ENCODE measurements at regions of chr5 and their contacts with region 1.

Region 1: DNA sequence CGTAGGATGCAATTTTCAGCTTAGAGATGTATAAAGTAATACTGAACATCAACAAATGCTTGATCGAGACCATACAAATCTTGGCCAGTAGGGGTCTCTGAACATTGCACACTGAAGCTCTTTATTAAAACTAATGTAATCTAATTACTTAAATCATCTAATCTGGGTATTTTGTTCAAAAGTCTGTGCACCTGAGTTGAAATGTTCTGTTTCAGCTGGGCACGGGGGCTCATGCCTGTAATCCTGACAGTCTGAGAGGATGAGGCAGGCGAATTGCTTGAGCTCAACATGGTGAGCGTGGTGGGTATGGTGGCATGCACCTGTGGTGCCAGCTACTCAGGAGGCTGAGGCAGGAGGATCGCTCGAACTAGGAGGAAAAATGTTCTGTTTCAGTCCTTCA is 41.0 kb downstream of the ESM1 start:
- DNase-seq: peak; percentile 56
- H3K4me3 Mint-ChIP-seq: no peak overlapping the region
- H3K27ac Mint-ChIP-seq: no peak overlapping the region
- H3K4me1 Mint-ChIP-seq: peaks cover 18% of the 10 kb centered on the region
- H3K27me3 Mint-ChIP-seq: peaks cover 13% of the 10 kb centered on the region

Region 2: GRCh38 chr5:54738118-54738972 is 206.0 kb before region 1 on chr5:
- CTCF ChIA-PET with region 1: no interaction called
- DNase-seq: no peak
- H3K4me3 Mint-ChIP-seq: no peak overlapping the region
- H3K27ac Mint-ChIP-seq: no peak overlapping the region
- H3K4me1 Mint-ChIP-seq: peaks cover 18% of the 10 kb centered on the region
- H3K27me3 Mint-ChIP-seq: peaks cover 33% of the 10 kb centered on the region

Region 3: DNA sequence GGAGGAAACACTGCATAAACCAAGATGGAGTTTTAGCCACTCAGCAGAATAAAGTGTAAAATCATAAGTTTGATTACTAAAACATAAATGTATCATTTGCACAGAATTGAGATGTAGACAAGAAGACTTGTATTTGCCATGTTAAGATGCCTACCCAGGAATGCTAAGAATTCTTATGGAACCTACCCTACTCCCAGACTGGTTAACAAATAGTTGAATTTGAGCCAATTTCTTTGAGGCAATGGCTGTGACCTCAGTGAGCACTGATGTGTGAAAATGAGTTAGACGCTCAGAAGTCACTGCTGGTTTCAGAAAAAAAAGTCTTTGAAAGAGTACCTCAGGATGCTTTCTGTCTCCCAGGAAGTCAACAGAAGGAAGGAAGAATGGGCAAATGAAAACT is 54.5 kb before region 1 on chr5:
- CTCF ChIA-PET with region 1: no interaction called
- DNase-seq: no peak
- H3K4me3 Mint-ChIP-seq: no peak overlapping the region
- H3K27ac Mint-ChIP-seq: no peak overlapping the region
- H3K4me1 Mint-ChIP-seq: no peaks in the 10 kb centered on the region
- H3K27me3 Mint-ChIP-seq: peaks cover 85% of the 10 kb centered on the region

Region 4: DNA sequence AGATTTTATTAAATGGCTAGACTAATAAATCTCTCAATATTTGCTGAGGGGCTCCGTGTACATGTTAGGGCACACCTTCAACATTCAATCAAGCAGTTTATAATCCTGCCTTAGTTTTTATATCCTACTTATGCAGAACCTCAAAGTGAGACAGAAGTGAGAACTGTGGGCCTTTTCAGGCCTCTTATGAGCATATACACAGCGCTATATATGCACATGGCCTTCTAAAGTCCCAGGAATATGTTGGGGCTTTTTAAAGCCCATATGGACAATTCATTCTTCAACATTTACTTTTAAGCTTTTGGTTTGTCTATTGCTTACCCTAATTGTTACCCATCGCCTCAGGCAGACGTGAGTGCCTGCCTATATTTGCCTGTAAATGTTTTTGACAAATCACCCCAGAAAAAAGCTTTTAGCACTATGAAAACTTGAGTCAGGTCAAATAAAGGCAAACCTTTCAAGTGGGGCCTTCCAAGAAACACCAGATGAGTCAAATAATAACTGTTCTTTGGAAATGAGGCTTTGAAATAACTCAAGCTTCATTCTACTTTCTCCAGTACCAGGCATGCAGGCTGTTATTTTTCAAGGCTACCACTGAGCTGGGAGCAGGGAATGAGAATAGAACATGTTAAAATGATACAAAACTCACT is 17.1 kb before region 1 on chr5:
- CTCF ChIA-PET with region 1: interaction called, 34 read pairs
- DNase-seq: no peak
- H3K4me3 Mint-ChIP-seq: no peak overlapping the region
- H3K27ac Mint-ChIP-seq: peak overlapping the region; percentile 28
- H3K4me1 Mint-ChIP-seq: peaks cover 22% of the 10 kb centered on the region
- H3K27me3 Mint-ChIP-seq: peaks cover 6% of the 10 kb centered on the region

Region 5: GRCh38 chr5:55021410-55021809 is 77.0 kb after region 1 on chr5:
- CTCF ChIA-PET with region 1: interaction called, 13 read pairs
- DNase-seq: no peak
- H3K4me3 Mint-ChIP-seq: no peak overlapping the region
- H3K27ac Mint-ChIP-seq: no peak overlapping the region
- H3K4me1 Mint-ChIP-seq: peaks cover 58% of the 10 kb centered on the region
- H3K27me3 Mint-ChIP-seq: no peaks in the 10 kb centered on the region

Region 6: DNA sequence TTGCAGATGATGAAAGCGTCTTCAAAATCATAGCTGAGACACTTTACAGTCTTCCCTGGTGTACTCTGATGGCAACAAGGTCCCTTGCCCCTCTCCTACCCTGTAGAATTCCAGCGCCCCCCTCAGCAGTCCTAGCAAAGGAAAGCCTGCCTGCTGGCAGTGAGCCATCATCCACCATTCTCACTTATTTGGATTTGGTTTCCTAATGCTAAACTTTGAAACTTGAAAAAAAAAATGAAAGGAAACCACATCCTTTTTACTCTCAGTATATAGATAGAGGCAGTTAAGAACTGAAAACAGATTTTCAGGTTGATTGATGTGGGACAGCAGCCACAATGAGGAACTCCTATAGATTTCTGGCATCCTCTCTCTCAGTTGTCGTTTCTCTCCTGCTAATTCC is 158.0 kb after region 1 on chr5 and contains the start of gene GZMA:
- CTCF ChIA-PET with region 1: interaction called, 26 read pairs
- DNase-seq: peak; percentile 70
- H3K4me3 Mint-ChIP-seq: peak within 1 kb of the TSS; percentile 77
- H3K27ac Mint-ChIP-seq: peak within 1 kb of the TSS; percentile 96
- H3K4me1 Mint-ChIP-seq: peaks cover 88% of the 10 kb centered on the region
- H3K27me3 Mint-ChIP-seq: no peaks in the 10 kb centered on the region

Region 7: GRCh38 chr5:55159763-55160492 is 215.6 kb after region 1 on chr5 and contains the start of gene GPX8:
- CTCF ChIA-PET with region 1: interaction called, 14 read pairs
- DNase-seq: peak; percentile 33
- H3K4me3 Mint-ChIP-seq: no peak within 1 kb of the TSS
- H3K27ac Mint-ChIP-seq: no peak within 1 kb of the TSS
- H3K4me1 Mint-ChIP-seq: peaks cover 3% of the 10 kb centered on the region
- H3K27me3 Mint-ChIP-seq: peaks cover 46% of the 10 kb centered on the region